ENCODE measurements at regions of chr6 and their contacts with region 1.

Region 1: GRCh38 chr6:150813319-150813992 is 52.0 kb upstream of the MTHFD1L start:
- DNase-seq: no peak
- ATAC-seq: peak; percentile 12 to 62 (median 36)
- H3K4me3 ChIP-seq: no peak overlapping the region
- H3K27ac ChIP-seq: peak overlapping the region in 9 of 10 donors; percentile 34 to 77 (median 59)
- H3K4me1 ChIP-seq: peaks cover 0 to 35% (median 12%) of the 10 kb centered on the region in 9 donors
- H3K27me3 ChIP-seq: peaks cover 0 to 5% (median 0%) of the 10 kb centered on the region in 7 donors
- CTCF ChIP-seq: no peak

Region 2: DNA sequence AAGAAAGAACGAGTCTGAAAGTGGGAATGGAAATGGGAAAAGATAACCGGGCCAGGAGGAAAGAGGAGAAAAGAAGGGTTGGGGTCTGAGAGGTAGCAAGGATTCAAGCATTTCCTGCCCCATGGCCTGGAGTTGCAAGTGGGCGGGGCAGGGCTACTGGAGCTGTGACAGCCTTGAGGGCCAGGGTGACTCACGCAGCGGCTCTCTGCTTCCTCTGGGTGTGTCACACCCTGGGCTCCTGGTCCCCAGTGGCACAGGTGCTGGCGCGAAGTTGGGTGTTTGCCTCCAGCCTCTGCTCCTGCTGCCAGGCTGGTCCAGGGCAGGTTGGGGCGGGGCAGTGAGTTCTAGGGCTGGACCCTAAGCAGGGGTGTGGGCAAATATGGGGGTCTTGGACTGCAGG is 741.3 kb before region 1 on chr6:
- intact Hi-C with region 1: loop called in 2 of 10 experiments (anchors 10 kb)
- DNase-seq: peak in 1 of 2 donors; percentile 30
- ATAC-seq: no peak
- H3K4me3 ChIP-seq: no peak overlapping the region
- H3K27ac ChIP-seq: no peak overlapping the region
- H3K4me1 ChIP-seq: peaks cover 0 to 16% (median 7%) of the 10 kb centered on the region in 9 donors
- H3K27me3 ChIP-seq: peaks cover 0 to 17% (median 0%) of the 10 kb centered on the region in 7 donors
- CTCF ChIP-seq: no peak

Region 3: GRCh38 chr6:150079604-150080003 is 733.9 kb before region 1 on chr6:
- intact Hi-C with region 1: loop called in 3 of 10 experiments (anchors 10 kb)
- DNase-seq: no peak
- ATAC-seq: no peak
- H3K4me3 ChIP-seq: no peak overlapping the region
- H3K27ac ChIP-seq: no peak overlapping the region
- H3K4me1 ChIP-seq: no peaks in the 10 kb centered on the region
- H3K27me3 ChIP-seq: peaks cover 0 to 35% (median 0%) of the 10 kb centered on the region in 7 donors
- CTCF ChIP-seq: no peak

Region 4: DNA sequence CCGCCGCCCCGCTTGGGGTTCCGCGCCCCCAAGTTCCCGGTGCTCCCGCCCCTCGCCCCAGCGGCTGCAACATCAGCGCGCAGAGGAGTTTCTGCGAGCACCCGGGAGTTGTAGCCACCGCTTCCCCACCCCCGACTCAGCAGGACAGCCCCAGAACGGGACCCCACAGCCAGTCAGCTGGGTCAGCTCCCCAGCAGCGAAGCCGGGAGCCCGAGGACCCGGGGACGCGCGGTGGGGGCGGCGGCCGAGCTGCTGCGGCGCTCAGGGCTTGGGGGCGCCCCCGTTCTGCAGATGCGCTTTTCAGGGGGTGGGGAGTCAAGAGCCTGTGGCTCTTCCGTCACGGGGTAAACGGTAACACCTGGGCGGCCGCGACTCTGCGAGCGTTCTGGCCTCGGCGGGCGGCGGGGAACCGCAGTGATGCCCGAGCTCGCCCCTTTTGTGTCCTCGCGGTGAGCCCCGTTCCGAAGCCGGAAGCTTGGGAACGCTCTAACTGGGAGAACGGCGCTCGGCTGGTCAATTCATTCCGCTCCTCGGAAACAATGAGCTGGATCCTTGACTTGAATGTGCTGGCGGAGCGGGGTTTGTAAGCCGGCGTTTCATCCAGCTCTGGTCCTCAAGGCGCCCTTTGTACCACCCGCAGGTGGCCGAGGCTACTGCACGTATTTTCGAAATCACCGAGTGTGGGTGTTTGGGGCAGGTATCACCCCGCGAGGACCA is 213.0 kb before region 1 on chr6:
- intact Hi-C with region 1: loop called in 8 of 10 experiments (anchors 5 to 10 kb)
- DNase-seq: peak; percentile 55 to 73
- ATAC-seq: peak; percentile 65 to 83 (median 78)
- H3K4me3 ChIP-seq: peak overlapping the region; percentile 56 to 94 (median 80)
- H3K27ac ChIP-seq: peak overlapping the region; percentile 84 to 96 (median 90)
- H3K4me1 ChIP-seq: peaks cover 0 to 25% (median 12%) of the 10 kb centered on the region in 9 donors
- H3K27me3 ChIP-seq: peaks cover 0 to 63% (median 6%) of the 10 kb centered on the region in 7 donors
- CTCF ChIP-seq: peak; percentile 19 to 64 (median 51)

Region 5: DNA sequence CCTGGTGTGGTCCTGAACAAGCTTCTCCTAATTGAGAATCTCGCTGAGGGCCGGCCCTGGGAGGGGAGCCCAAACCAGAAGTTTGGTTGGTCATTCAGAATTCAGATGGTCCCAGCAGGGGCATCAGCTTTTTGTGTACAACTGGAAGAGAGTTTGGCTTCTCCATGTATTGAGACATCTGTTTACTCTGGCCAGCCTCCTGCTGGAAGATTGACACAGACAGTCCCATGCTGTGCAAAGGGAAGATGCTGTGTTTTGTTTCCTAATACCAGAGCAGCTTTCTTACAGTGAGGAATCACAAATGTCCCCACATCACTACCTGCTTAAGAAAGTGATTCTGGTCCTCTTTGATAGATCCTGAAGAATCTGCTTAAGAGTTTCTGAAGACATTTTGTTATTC is 115.9 kb before region 1 on chr6:
- intact Hi-C with region 1: no loop called
- DNase-seq: peak in 1 of 2 donors; percentile 17
- ATAC-seq: peak in 6 of 8 donors; percentile 29 to 67 (median 56)
- H3K4me3 ChIP-seq: no peak overlapping the region
- H3K27ac ChIP-seq: no peak overlapping the region
- H3K4me1 ChIP-seq: peaks cover 0 to 57% (median 6%) of the 10 kb centered on the region in 9 donors
- H3K27me3 ChIP-seq: no peaks in the 10 kb centered on the region
- CTCF ChIP-seq: no peak

Region 6: DNA sequence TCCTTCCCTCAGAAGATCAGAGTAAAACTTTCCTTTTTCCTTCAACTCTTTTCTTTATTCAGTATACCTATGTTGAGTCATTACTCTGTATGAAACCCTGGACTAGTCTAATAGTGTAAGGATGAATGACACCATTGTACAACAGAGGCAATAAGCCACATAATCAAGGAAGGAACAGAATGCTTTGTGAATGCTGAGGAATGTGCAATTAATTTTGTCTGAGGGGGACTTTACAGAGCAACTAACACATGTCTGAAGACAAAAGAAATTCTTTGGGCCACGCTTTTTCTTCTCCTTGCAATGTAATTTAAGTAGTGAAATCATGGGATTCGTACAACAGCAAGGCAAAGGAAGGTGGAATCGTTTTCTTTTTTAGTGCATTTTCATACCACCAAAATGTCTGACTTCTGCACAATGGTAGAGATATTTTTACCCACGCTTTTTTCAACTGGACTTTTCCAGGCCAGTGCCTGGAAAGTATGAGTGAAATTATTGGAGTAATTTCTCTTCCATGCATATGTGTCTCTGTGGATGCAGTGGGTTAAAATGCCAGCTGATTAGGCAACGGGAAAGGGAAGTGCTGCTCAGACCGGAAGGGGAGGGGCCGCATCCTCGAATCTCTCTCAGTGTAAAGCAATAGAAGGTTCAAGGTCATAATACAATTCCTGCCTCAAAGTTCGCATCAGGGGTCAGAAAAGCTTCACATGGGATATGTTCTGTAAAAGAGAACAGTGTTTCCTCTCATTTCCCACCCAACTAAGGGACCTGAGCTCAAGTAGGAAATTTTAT is 37.8 kb before region 1 on chr6:
- intact Hi-C with region 1: no loop called
- DNase-seq: peak in 1 of 2 donors; percentile 36
- ATAC-seq: peak in 7 of 8 donors; percentile 26 to 80 (median 65)
- H3K4me3 ChIP-seq: no peak overlapping the region
- H3K27ac ChIP-seq: peak overlapping the region in 7 of 10 donors; percentile 5 to 59 (median 24)
- H3K4me1 ChIP-seq: peaks cover 0 to 33% (median 7%) of the 10 kb centered on the region in 9 donors
- H3K27me3 ChIP-seq: no peaks in the 10 kb centered on the region
- CTCF ChIP-seq: no peak